ENCODE measurements at regions of chr12 and their contacts with region 1.

Region 1: DNA sequence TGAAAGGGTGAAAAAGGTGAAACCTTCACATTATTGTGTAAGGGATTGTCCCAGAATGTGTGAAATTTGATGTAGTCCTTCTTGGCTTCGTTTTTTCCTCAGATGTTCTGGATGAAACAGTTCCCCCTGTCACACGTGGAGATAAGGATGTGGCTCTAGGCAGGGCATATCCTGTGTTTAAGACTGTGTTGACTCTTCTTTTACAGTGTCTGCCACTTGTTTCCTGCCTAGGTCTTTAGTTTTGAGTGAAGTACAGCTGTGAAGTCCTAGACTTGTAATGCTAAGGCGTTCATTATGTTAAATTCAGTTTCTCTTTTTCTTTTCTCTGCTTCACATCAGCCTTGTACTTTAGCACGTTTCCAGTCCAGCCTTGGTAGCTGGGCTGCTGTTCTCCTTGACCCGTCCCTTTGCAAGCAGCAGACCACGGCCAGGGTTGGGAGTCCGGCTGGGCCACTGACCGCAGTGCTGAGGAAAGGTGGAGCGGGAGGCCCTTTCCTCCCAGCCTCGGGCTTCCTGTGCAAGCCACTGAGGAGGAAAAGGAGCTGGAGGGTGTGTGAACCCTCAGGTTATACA is 59.1 kb downstream of the RASSF3 start:
- DNase-seq: peak; percentile 26 to 87 (median 84)
- ATAC-seq: peak; percentile 93
- H3K4me3 ChIP-seq: peak overlapping the region; percentile 52
- H3K4me3 Mint-ChIP-seq: peak overlapping the region; percentile 85 to 98 (median 92)
- H3K27ac ChIP-seq: peak overlapping the region; percentile 72
- H3K27ac Mint-ChIP-seq: peak overlapping the region; percentile 91 to 99 (median 97)
- H3K4me1 ChIP-seq: peaks cover 89 to 90% of the 10 kb centered on the region in 2 donors
- H3K4me1 Mint-ChIP-seq: peaks cover 65 to 98% (median 90%) of the 10 kb centered on the region in 7 donors
- H3K27me3 ChIP-seq: no peaks in the 10 kb centered on the region
- H3K27me3 Mint-ChIP-seq: no peaks in the 10 kb centered on the region

Region 2: GRCh38 chr12:64550755-64551154 is 118.6 kb before region 1 on chr12:
- CTCF ChIA-PET with region 1: interaction called, 4 read pairs
- POLR2A ChIA-PET with region 1: interaction called, 5 read pairs
- intact Hi-C with region 1: loop called (anchors 1 kb)
- DNase-seq: no peak
- ATAC-seq: no peak
- H3K4me3 ChIP-seq: no peak overlapping the region
- H3K4me3 Mint-ChIP-seq: no peak overlapping the region
- H3K27ac ChIP-seq: no peak overlapping the region
- H3K27ac Mint-ChIP-seq: peak overlapping the region in 3 of 9 donors; percentile 7 to 83 (median 18)
- H3K4me1 ChIP-seq: peaks cover 0 to 4% of the 10 kb centered on the region in 2 donors
- H3K4me1 Mint-ChIP-seq: peaks cover 2 to 11% (median 9%) of the 10 kb centered on the region in 7 donors
- H3K27me3 ChIP-seq: no peaks in the 10 kb centered on the region
- H3K27me3 Mint-ChIP-seq: peaks cover 0 to 20% (median 0%) of the 10 kb centered on the region in 5 donors

Region 3: GRCh38 chr12:64650762-64651161 is 18.6 kb before region 1 on chr12:
- CTCF ChIA-PET with region 1: interaction called, 3 read pairs
- POLR2A ChIA-PET with region 1: interaction called, 9 read pairs
- intact Hi-C with region 1: loop called in 1 of 2 experiments (anchors 1 kb)
- DNase-seq: no peak
- ATAC-seq: no peak
- H3K4me3 ChIP-seq: no peak overlapping the region
- H3K4me3 Mint-ChIP-seq: peak overlapping the region in 9 of 10 donors; percentile 33 to 69 (median 59)
- H3K27ac ChIP-seq: peak overlapping the region; percentile 2
- H3K27ac Mint-ChIP-seq: peak overlapping the region in 8 of 9 donors; percentile 59 to 91 (median 86)
- H3K4me1 ChIP-seq: peaks cover 29 to 58% of the 10 kb centered on the region in 2 donors
- H3K4me1 Mint-ChIP-seq: peaks cover 49 to 96% (median 76%) of the 10 kb centered on the region in 7 donors
- H3K27me3 ChIP-seq: no peaks in the 10 kb centered on the region
- H3K27me3 Mint-ChIP-seq: no peaks in the 10 kb centered on the region

Region 4: GRCh38 chr12:64687816-64688215 is 18.5 kb after region 1 on chr12:
- CTCF ChIA-PET with region 1: interaction called, 13 read pairs
- POLR2A ChIA-PET with region 1: interaction called, 751 read pairs
- intact Hi-C with region 1: loop called (anchors 1 kb)
- DNase-seq: peak in 1 of 9 donors; percentile 38
- ATAC-seq: no peak
- H3K4me3 ChIP-seq: peak overlapping the region; percentile 7
- H3K4me3 Mint-ChIP-seq: peak overlapping the region; percentile 52 to 84 (median 73)
- H3K27ac ChIP-seq: peak overlapping the region; percentile 63
- H3K27ac Mint-ChIP-seq: peak overlapping the region; percentile 74 to 98 (median 96)
- H3K4me1 ChIP-seq: peaks cover 33 to 81% of the 10 kb centered on the region in 2 donors
- H3K4me1 Mint-ChIP-seq: peaks cover 54 to 95% (median 78%) of the 10 kb centered on the region in 7 donors
- H3K27me3 ChIP-seq: no peaks in the 10 kb centered on the region
- H3K27me3 Mint-ChIP-seq: no peaks in the 10 kb centered on the region

Region 5: GRCh38 chr12:64714551-64714968 is 45.2 kb after region 1 on chr12:
- CTCF ChIA-PET with region 1: no interaction called
- POLR2A ChIA-PET with region 1: no interaction called
- intact Hi-C with region 1: loop called in 1 of 2 experiments (anchors 1 kb)
- DNase-seq: no peak
- ATAC-seq: peak; percentile 89
- H3K4me3 ChIP-seq: no peak overlapping the region
- H3K4me3 Mint-ChIP-seq: no peak overlapping the region
- H3K27ac ChIP-seq: no peak overlapping the region
- H3K27ac Mint-ChIP-seq: peak overlapping the region in 4 of 9 donors; percentile 8 to 48 (median 32)
- H3K4me1 ChIP-seq: peaks cover 0 to 13% of the 10 kb centered on the region in 2 donors
- H3K4me1 Mint-ChIP-seq: peaks cover 12 to 40% (median 29%) of the 10 kb centered on the region in 7 donors
- H3K27me3 ChIP-seq: no peaks in the 10 kb centered on the region
- H3K27me3 Mint-ChIP-seq: no peaks in the 10 kb centered on the region